GM13977 (cell line): ENCODE measurements at regions of chr7 and their contacts with region 1.

Region 1: DNA sequence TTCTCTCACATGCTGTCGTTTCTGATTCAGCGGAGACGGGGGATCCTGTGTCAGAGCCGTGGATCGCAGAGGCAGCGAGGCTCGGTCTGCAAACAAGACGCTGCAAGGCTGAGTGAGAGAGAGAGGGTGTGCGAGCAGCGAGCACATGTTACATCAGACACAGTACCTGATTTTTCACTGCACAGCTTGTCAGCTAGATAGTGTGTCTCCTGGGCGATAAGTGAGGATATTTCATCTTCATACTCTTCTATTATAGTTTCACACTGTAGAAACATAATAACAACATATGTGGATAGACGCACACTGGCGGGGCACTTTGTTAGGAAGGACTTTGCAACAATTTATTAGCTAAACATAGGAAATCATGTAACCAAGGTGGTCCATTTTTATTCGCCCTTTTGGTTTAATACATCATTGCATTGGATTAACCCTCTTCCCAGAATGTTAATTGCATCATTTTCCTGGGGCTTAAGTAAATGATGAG is 39.5 kb downstream of the CNPY1 start:
- DNase-seq: no peak
- CTCF ChIP-seq: no peak

Region 2: DNA sequence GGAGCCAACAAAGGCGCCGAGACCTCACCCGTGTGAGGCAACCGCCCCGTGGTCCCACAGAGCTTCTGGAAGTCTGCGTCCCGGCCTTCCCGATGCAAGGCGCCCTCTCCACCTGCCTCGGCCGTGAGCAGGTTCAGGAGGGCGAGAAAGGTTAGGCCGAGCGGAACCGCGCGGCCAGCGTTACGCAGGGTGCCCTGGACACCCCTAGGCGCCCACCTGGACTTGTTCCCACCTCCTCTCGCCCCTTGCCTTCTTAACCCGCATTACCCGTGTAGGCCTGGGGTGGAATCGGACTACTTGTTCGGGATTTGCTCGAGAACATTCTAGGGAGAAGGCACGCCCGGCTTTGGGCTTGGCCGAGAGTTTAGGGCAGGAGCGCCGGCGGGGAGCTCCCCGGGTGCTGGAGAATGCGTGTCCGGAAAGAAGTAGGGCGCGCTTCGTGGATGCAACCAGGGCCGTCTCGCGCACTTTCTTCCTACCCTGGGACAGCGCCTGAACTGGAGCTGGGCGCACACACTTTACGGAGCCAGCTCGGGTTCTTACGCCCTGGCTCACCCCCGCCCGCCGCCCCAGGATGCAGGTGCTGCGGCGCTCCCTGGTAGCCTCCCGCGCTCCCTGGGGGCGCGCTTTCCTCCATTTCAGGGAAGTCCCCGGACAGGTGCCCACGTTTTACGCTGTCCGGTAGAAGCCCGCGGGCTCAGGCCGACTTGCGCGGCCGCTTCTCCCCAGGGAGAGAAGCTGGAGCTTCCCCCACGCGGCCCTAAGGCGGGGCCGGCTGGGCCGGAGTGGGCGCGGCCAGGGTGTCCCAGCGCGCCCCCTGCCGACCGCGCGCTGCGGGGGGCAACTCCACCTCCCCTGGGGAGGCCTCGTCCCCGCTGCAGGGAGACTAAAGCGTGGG is 134.8 kb before region 1 on chr7:
- in situ Hi-C with region 1: loop called (anchors 10 kb)
- DNase-seq: peak; percentile 77
- CTCF ChIP-seq: peak; percentile 65

Region 3: GRCh38 chr7:155412537-155413253 is 94.2 kb before region 1 on chr7:
- in situ Hi-C with region 1: no loop called
- DNase-seq: peak; percentile 89
- CTCF ChIP-seq: peak; percentile 85

Region 4: DNA sequence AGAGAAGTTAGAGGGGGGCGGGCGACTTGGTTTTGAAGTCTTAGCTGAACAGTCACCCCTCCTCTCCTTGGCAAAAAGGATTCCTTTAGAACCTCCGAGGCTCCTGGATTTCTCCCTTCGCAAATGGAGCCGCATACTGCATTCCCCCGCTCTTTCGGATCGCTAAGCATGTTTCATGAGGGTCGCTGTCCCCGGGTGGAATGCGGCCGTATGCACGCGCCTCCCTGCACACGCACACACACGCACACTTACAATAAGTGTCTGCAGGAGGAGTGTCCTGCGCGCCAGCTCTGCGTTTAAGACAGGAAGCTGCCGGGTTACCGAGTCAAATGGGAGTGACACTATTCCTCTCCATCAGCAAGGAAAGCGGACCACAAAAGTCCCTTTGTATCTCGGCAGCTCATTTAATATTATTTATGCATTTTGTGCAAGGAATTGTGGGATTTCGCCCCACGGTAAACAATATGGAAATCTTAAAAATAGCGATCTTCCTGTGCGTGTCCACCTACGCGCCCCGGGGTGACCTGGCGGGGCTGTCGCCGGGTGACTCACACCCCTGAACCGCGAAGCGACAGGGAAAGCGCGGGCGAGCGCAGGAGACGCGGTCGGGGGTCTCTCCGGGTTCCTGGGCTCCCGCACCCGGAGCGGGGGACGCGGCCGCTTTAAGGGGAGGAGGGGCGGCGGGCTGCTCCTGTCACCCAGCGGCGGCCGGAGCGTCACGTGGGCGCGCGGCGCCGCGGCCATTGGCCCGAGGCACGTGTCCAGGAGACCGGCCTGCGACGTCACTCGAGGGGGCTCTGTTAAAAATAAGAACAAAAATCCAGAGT is 49.9 kb before region 1 on chr7:
- in situ Hi-C with region 1: loop called (anchors 10 kb)
- DNase-seq: peak; percentile 83
- CTCF ChIP-seq: no peak